BJ (cell line): ENCODE measurements at regions of chr7 and their contacts with region 1.

Region 1: GRCh38 chr7:92833024-92833765 is 3.2 kb downstream of the CDK6 start:
- DNase-seq: no peak
- H3K4me3 ChIP-seq: peak overlapping the region; percentile 84
- H3K27me3 ChIP-seq: no peaks in the 10 kb centered on the region
- CTCF ChIP-seq: peak; percentile 82

Region 2: GRCh38 chr7:92621026-92621540 is 212.1 kb before region 1 on chr7:
- CTCF ChIA-PET with region 1: interaction called, 12 read pairs
- POLR2A ChIA-PET with region 1: no interaction called
- DNase-seq: peak; percentile 52
- H3K4me3 ChIP-seq: no peak overlapping the region
- H3K27me3 ChIP-seq: no peaks in the 10 kb centered on the region
- CTCF ChIP-seq: peak; percentile 75

Region 3: GRCh38 chr7:92691578-92691977 is 141.6 kb before region 1 on chr7:
- CTCF ChIA-PET with region 1: interaction called, 38 read pairs
- POLR2A ChIA-PET with region 1: no interaction called
- DNase-seq: no peak
- H3K4me3 ChIP-seq: no peak overlapping the region
- H3K27me3 ChIP-seq: no peaks in the 10 kb centered on the region
- CTCF ChIP-seq: peak; percentile 50

Region 4: DNA sequence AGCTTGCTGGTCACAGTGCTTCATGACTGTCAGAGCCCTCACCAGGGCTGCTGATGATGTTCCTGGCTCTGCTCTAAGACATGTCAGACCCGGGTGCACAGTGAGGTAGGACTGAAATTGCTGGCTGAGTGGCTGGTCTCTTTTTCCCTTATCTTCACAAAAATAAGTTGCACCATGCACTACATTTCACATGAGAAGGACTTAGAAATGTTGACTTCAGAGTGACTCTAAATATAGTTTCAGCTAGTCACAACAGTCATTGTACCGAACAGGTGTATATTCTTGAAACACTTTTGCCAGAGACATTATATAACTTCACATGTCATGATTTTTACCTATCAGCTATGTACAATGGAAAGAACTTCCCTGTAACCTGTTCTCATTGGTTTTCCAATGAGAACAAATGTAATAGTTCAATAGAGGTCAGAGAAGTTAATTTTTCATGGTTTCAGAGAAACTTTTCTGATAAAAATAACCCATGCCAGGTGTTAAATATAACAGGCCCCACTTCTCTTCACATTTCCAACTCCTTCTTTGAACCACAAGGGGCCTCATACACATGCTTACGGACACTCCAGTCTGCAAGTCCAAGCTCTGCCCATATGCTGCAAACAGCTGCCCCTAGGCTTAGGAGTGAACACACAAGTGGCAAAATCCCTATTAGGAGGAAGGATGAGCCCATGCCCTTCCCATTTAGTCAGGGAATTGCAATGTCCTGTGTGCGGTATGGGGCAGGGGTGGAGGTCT is 112.4 kb before region 1 on chr7:
- CTCF ChIA-PET with region 1: interaction called, 12 read pairs
- POLR2A ChIA-PET with region 1: no interaction called
- DNase-seq: no peak
- H3K4me3 ChIP-seq: no peak overlapping the region
- H3K27me3 ChIP-seq: no peaks in the 10 kb centered on the region
- CTCF ChIP-seq: no peak

Region 5: GRCh38 chr7:92766461-92767003 is 66.7 kb before region 1 on chr7:
- CTCF ChIA-PET with region 1: interaction called, 11 read pairs
- POLR2A ChIA-PET with region 1: no interaction called
- DNase-seq: no peak
- H3K4me3 ChIP-seq: no peak overlapping the region
- H3K27me3 ChIP-seq: no peaks in the 10 kb centered on the region
- CTCF ChIP-seq: no peak

Region 6: DNA sequence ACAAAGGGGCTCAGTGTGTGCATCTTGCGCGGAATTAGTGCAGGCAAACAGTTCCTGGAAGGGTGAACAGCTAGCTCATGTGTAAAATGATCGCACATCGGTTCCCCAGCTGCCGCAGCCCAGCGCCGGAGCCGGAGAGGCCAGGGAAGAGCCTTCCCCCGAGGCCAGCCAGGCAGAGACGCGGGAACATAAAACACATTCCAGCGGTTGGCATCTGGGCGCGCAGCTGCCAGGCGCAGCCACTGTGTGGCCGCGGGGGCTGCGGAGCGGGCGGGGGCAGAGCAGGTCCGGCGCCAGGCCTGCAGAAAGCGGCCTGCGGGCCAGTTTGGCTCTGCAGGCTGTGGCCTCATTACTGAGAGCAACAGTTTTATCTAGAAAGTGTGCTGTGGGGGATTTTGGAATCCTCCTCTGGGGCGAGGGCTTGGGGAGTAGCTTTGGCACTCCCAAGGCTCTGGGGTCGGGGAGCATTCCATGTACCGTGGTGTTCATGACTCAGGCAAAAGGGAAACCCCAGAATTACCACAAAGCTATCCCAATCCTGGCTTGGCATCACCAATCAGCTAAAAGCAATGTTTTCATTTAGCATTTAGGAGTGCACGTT is 210.3 kb after region 1 on chr7:
- CTCF ChIA-PET with region 1: interaction called, 13 read pairs
- POLR2A ChIA-PET with region 1: no interaction called
- DNase-seq: peak; percentile 48
- H3K4me3 ChIP-seq: peak overlapping the region; percentile 27; the same call in 1 of the 2 replicates
- H3K27me3 ChIP-seq: no peaks in the 10 kb centered on the region
- CTCF ChIP-seq: no peak